ENCODE measurements at regions of chr9 and their contacts with region 1.

Region 1: DNA sequence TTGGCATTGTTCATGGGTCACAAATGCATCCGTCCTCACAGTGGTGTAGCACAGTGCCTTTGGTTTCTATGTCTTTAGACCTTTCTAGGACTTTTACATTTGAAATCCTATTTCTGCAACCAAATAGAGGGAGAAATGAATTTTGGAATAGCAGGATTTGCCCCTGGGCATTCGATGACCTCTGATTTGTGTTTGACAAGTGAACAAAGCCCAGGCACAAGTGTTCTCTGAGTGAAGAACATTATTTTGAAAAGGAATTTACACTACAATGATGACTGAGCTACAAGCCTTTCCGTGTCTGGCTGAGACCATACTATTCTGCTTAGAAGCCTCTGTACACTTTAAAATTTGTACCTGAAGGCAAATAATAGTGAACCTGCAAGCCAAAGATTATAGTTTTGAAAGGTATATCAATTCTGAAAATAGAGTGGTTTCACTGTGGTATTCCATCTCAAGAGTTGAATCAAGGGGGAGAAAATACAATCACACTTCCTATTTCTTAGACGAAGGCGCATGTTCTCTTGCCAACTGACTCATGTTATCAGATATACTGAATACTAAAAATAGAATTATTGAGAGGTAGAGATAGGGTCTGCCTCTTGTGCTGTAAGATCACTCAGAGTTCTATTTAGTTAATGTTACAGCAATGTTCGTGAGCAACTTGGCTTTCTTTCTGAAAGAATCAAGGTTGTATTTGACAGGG is 297.6 kb downstream of the KDM4C start:
- DNase-seq: peak; percentile 17
- ATAC-seq: peak; percentile 72
- H3K4me3 ChIP-seq: no peak overlapping the region
- H3K27ac ChIP-seq: no peak overlapping the region
- H3K4me1 ChIP-seq: peaks cover 11% of the 10 kb centered on the region
- H3K27me3 ChIP-seq: no peaks in the 10 kb centered on the region
- CTCF ChIP-seq: no peak
- EP300 ChIP-seq: no peak
- POLR2A ChIP-seq: no peak
- RAD21 ChIP-seq: no peak

Region 2: GRCh38 chr9:6616951-6617602 is 438.3 kb before region 1 on chr9:
- CTCF ChIA-PET with region 1: no interaction called
- POLR2A ChIA-PET with region 1: no interaction called
- RAD21 ChIA-PET with region 1: no interaction called
- SMC1A ChIA-PET with region 1: no interaction called
- in situ Hi-C with region 1: no loop called
- intact Hi-C with region 1: no loop called
- DNase-seq: no peak
- ATAC-seq: no peak
- H3K4me3 ChIP-seq: no peak overlapping the region
- H3K27ac ChIP-seq: no peak overlapping the region
- H3K4me1 ChIP-seq: peaks cover 31% of the 10 kb centered on the region
- H3K27me3 ChIP-seq: no peaks in the 10 kb centered on the region
- CTCF ChIP-seq: no peak
- EP300 ChIP-seq: no peak
- POLR2A ChIP-seq: no peak
- RAD21 ChIP-seq: no peak

Region 3: GRCh38 chr9:6827439-6827838 is 227.9 kb before region 1 on chr9:
- CTCF ChIA-PET with region 1: interaction called, 5 read pairs
- POLR2A ChIA-PET with region 1: no interaction called
- RAD21 ChIA-PET with region 1: interaction called, 15 read pairs
- SMC1A ChIA-PET with region 1: interaction called, 7 read pairs
- in situ Hi-C with region 1: no loop called
- intact Hi-C with region 1: loop called (anchors 5 kb)
- DNase-seq: peak; percentile 16
- ATAC-seq: peak; percentile 81
- H3K4me3 ChIP-seq: no peak overlapping the region
- H3K27ac ChIP-seq: no peak overlapping the region
- H3K4me1 ChIP-seq: no peaks in the 10 kb centered on the region
- H3K27me3 ChIP-seq: no peaks in the 10 kb centered on the region
- CTCF ChIP-seq: peak; percentile 36 to 60 (median 47); a peak in 5 of 6 replicates
- EP300 ChIP-seq: no peak
- POLR2A ChIP-seq: no peak
- RAD21 ChIP-seq: peak; percentile 82

Region 4: GRCh38 chr9:6917162-6917561 is 138.2 kb before region 1 on chr9:
- CTCF ChIA-PET with region 1: interaction called, 7 read pairs
- POLR2A ChIA-PET with region 1: no interaction called
- RAD21 ChIA-PET with region 1: no interaction called
- SMC1A ChIA-PET with region 1: no interaction called
- in situ Hi-C with region 1: no loop called
- intact Hi-C with region 1: loop called (anchors 5 kb)
- DNase-seq: peak; percentile 46
- ATAC-seq: peak; percentile 94
- H3K4me3 ChIP-seq: no peak overlapping the region
- H3K27ac ChIP-seq: peak overlapping the region; percentile 56; the same call in 1 of the 2 replicates
- H3K4me1 ChIP-seq: peaks cover 22% of the 10 kb centered on the region
- H3K27me3 ChIP-seq: no peaks in the 10 kb centered on the region
- CTCF ChIP-seq: no peak
- EP300 ChIP-seq: peak in 1 of 2 experiments; percentile 80; a peak in 2 of 4 replicates
- POLR2A ChIP-seq: no peak
- RAD21 ChIP-seq: no peak

Region 5: GRCh38 chr9:7037176-7037575 is 18.2 kb before region 1 on chr9:
- CTCF ChIA-PET with region 1: interaction called, 23 read pairs
- POLR2A ChIA-PET with region 1: no interaction called
- RAD21 ChIA-PET with region 1: no interaction called
- SMC1A ChIA-PET with region 1: interaction called, 23 read pairs
- in situ Hi-C with region 1: no loop called
- intact Hi-C with region 1: no loop called
- DNase-seq: no peak
- ATAC-seq: no peak
- H3K4me3 ChIP-seq: no peak overlapping the region
- H3K27ac ChIP-seq: no peak overlapping the region
- H3K4me1 ChIP-seq: no peaks in the 10 kb centered on the region
- H3K27me3 ChIP-seq: no peaks in the 10 kb centered on the region
- CTCF ChIP-seq: no peak
- EP300 ChIP-seq: no peak
- POLR2A ChIP-seq: no peak
- RAD21 ChIP-seq: no peak

Region 6: DNA sequence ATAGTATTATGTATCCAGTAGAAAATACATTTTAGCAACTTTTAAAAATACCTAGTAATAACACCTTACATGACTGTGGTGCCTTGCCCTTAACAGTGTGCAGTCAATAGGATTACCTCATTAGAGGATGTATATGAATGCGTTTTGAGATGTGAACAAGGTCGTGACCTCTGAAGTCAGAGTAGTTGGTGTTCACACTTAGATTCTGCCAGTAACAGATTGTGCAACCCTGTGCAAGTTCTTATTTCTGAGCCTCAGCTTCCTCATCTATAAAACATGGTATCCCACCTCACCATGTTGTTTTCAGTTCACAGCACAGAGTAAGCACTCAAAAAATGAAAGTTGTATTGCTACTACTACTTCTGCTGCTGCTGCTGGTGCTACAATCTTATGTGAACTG is 49.7 kb after region 1 on chr9:
- CTCF ChIA-PET with region 1: no interaction called
- POLR2A ChIA-PET with region 1: no interaction called
- RAD21 ChIA-PET with region 1: no interaction called
- SMC1A ChIA-PET with region 1: interaction called, 3 read pairs
- in situ Hi-C with region 1: no loop called
- intact Hi-C with region 1: loop called (anchors 5 kb)
- DNase-seq: no peak
- ATAC-seq: no peak
- H3K4me3 ChIP-seq: no peak overlapping the region
- H3K27ac ChIP-seq: no peak overlapping the region
- H3K4me1 ChIP-seq: no peaks in the 10 kb centered on the region
- H3K27me3 ChIP-seq: no peaks in the 10 kb centered on the region
- CTCF ChIP-seq: no peak
- EP300 ChIP-seq: no peak
- POLR2A ChIP-seq: no peak
- RAD21 ChIP-seq: no peak

Region 7: GRCh38 chr9:7246917-7247522 is 191.7 kb after region 1 on chr9:
- CTCF ChIA-PET with region 1: no interaction called
- POLR2A ChIA-PET with region 1: no interaction called
- RAD21 ChIA-PET with region 1: no interaction called
- SMC1A ChIA-PET with region 1: no interaction called
- in situ Hi-C with region 1: no loop called
- intact Hi-C with region 1: no loop called
- DNase-seq: no peak
- ATAC-seq: no peak
- H3K4me3 ChIP-seq: no peak overlapping the region
- H3K27ac ChIP-seq: no peak overlapping the region
- H3K4me1 ChIP-seq: no peaks in the 10 kb centered on the region
- H3K27me3 ChIP-seq: no peaks in the 10 kb centered on the region
- CTCF ChIP-seq: no peak
- EP300 ChIP-seq: no peak
- POLR2A ChIP-seq: no peak
- RAD21 ChIP-seq: no peak